Mammary epithelial cell (primary cell): ENCODE measurements at regions of chr2 and their contacts with region 1.

Region 1: GRCh38 chr2:98835831-98836385 is 100.1 kb downstream of the CRACDL start:
- DNase-seq: no peak
- H3K4me3 ChIP-seq: no peak overlapping the region
- H3K27ac ChIP-seq: no peak overlapping the region
- H3K4me1 ChIP-seq: peaks cover 23% of the 10 kb centered on the region
- H3K27me3 ChIP-seq: no peaks in the 10 kb centered on the region
- CTCF ChIP-seq: no peak

Region 2: DNA sequence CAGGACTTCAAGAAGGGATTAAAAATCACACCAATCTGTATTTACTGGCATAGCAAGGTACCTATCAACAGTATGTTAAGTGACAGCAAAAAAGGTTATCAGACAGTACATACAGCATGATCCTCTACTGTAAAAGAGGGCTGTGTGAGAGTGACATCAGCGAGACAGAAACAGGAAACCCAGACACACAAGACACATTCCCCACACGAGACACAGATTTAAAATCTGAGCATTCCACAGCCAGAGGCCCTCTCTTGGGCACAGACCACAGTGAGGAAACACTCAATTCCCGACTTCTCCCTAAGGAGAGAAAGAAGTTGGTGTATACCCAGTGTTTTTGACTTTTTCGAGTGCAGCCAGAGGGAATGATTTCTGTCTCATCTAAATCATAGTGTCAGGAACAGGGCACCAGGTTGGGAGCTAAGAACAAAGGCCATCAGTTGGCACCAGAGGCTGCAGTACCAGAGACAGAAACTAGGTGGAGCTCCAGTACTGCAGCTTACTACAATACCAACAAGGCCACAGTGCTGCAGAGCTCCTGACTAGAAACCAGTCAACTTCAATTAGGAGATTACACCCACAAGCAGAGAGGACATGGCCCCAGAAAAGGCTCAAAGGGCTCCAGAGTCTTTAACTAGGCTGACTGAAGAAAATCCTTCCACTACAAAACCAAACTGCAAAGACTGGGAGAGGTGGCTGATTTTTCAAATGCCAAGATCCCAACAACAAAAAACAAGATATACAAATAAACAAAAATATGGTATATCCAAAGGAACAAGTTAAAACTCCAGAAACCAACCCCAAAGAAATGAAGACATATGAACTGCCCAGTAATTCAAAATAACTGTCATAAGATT is 186.5 kb before region 1 on chr2:
- CTCF ChIA-PET with region 1: interaction called, 8 read pairs
- dilution Hi-C with region 1: no loop called
- in situ Hi-C with region 1: loop called (anchors 5 kb)
- intact Hi-C with region 1: loop called (anchors 1 kb)
- DNase-seq: peak; percentile 65
- H3K4me3 ChIP-seq: no peak overlapping the region
- H3K27ac ChIP-seq: no peak overlapping the region
- H3K4me1 ChIP-seq: peaks cover 7% of the 10 kb centered on the region
- H3K27me3 ChIP-seq: no peaks in the 10 kb centered on the region
- CTCF ChIP-seq: peak; percentile 99

Region 3: DNA sequence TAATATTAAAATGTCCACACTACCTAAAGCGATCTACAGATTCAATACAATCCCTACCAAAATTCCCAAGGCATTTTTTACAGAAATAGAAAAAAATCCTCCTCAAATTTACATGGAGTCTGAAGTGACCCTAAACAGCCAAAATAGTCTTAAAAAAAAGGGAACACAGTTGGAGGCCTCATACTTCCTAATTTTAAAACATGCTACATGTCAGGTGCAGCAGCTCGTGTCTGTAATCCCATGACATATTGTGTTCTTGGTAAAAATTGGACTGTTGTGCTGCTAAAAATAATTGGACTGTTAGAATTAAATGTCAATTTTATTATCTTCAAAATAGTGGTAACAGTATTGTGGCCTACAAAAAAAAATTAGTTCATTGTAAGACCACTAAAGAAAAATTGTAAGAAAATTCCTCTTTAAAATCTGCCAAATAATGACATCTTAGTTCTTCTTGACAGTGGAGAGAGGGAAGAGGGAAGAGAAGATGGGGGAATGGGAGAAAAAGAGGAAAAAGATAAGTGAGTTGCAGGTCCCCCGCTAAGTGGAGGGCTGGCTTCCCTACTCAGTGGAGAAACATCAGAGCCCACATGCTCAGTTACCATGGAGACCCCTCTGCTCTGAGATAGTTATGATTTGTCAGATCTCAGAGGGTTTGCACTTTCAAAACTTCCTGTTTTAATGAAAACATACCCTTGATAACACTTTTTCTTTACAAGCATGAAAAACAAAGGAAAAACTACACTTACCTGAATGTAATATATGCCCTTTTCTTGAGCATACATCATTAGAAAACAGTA is 181.0 kb before region 1 on chr2:
- CTCF ChIA-PET with region 1: interaction called, 8 read pairs
- dilution Hi-C with region 1: no loop called
- in situ Hi-C with region 1: loop called in 1 of 2 experiments (anchors 5 kb)
- intact Hi-C with region 1: no loop called
- DNase-seq: no peak
- H3K4me3 ChIP-seq: no peak overlapping the region
- H3K27ac ChIP-seq: no peak overlapping the region
- H3K4me1 ChIP-seq: peaks cover 4% of the 10 kb centered on the region
- H3K27me3 ChIP-seq: no peaks in the 10 kb centered on the region
- CTCF ChIP-seq: no peak

Region 4: GRCh38 chr2:98731041-98731893 is 104.6 kb before region 1 on chr2 and contains the start of gene MGAT4A:
- CTCF ChIA-PET with region 1: no interaction called
- dilution Hi-C with region 1: no loop called
- in situ Hi-C with region 1: no loop called
- intact Hi-C with region 1: loop called (anchors 2 kb)
- DNase-seq: peak; percentile 43
- H3K4me3 ChIP-seq: peak within 1 kb of the TSS; percentile 65 to 72 (median 68)
- H3K27ac ChIP-seq: no peak within 1 kb of the TSS
- H3K4me1 ChIP-seq: peaks cover 17% of the 10 kb centered on the region
- H3K27me3 ChIP-seq: no peaks in the 10 kb centered on the region
- CTCF ChIP-seq: no peak
- total RNA-seq, gene MGAT4A: 2.0 to 4.3 TPM

Region 5: GRCh38 chr2:98936353-98937351 is 100.7 kb after region 1 on chr2:
- CTCF ChIA-PET with region 1: no interaction called
- dilution Hi-C with region 1: no loop called
- in situ Hi-C with region 1: no loop called
- intact Hi-C with region 1: loop called (anchors 2 kb)
- DNase-seq: peak; percentile 53
- H3K4me3 ChIP-seq: peak overlapping the region; percentile 66 to 78 (median 71)
- H3K27ac ChIP-seq: peak overlapping the region; percentile 59
- H3K4me1 ChIP-seq: peaks cover 18% of the 10 kb centered on the region
- H3K27me3 ChIP-seq: no peaks in the 10 kb centered on the region
- CTCF ChIP-seq: peak; percentile 10 to 42